ENCODE measurements at regions of chr10 and their contacts with region 1.

Region 1: GRCh38 chr10:61992671-61993668 is 91.5 kb downstream of the ARID5B start:
- DNase-seq: peak; percentile 79 to 88 (median 84)
- H3K4me3 ChIP-seq: peak overlapping the region; percentile 9 to 39
- H3K4me3 Mint-ChIP-seq: peak overlapping the region; percentile 47 to 81 (median 74)
- H3K27ac ChIP-seq: peak overlapping the region; percentile 60
- H3K27ac Mint-ChIP-seq: peak overlapping the region; percentile 87 to 98 (median 94)
- H3K4me1 ChIP-seq: peaks cover 71% of the 10 kb centered on the region
- H3K4me1 Mint-ChIP-seq: peaks cover 52 to 72% (median 56%) of the 10 kb centered on the region in 4 donors
- H3K27me3 ChIP-seq: no peaks in the 10 kb centered on the region
- H3K27me3 Mint-ChIP-seq: peaks cover 0 to 3% of the 10 kb centered on the region in 2 donors

Region 2: DNA sequence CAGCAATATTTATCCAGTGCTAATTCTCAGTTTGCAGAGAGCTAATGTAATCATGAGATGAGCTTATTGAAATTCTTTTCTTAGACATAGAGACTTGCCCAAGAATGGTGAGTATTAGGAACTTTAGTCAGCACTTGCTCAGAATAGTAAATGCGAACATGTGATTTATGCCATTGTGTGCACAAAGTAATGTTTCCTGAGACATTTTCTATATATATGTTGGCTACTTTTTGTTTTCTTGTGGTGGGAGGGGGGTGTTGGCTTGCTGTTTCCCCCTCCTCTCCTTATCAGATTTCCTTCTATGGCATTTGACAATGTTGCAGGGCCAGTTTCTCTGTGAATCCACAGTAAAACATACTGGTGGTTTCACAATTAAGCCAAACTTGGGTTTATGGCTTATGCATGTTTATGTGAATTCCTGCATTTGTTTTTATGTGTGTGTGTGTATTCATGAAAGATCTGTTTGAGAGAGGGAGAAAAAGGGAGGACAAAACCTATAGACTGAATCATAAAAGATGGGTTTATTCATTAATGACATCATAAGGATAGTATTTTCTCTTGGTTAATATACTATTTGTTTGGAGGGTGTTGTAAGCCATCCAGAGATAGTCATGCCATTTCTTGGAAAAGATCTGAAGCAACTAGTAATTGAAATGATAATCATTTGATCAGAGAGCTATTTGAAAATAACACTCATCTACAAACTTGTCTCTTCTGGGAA is 55.2 kb before region 1 on chr10:
- CTCF ChIA-PET with region 1: interaction called, 4 read pairs
- POLR2A ChIA-PET with region 1: interaction called, 20 read pairs
- intact Hi-C with region 1: no loop called
- DNase-seq: no peak
- H3K4me3 ChIP-seq: peak overlapping the region in 1 of 2 donors; percentile 15
- H3K4me3 Mint-ChIP-seq: peak overlapping the region; percentile 3 to 83 (median 68)
- H3K27ac ChIP-seq: peak overlapping the region; percentile 23
- H3K27ac Mint-ChIP-seq: peak overlapping the region; percentile 31 to 94 (median 87)
- H3K4me1 ChIP-seq: peaks cover 78% of the 10 kb centered on the region
- H3K4me1 Mint-ChIP-seq: peaks cover 66 to 87% (median 75%) of the 10 kb centered on the region in 4 donors
- H3K27me3 ChIP-seq: no peaks in the 10 kb centered on the region
- H3K27me3 Mint-ChIP-seq: no peaks in the 10 kb centered on the region

Region 3: GRCh38 chr10:61974601-61975390 is 18.2 kb before region 1 on chr10:
- CTCF ChIA-PET with region 1: interaction called, 4 read pairs
- POLR2A ChIA-PET with region 1: interaction called, 6 read pairs
- intact Hi-C with region 1: loop called (anchors 2 kb)
- DNase-seq: no peak
- H3K4me3 ChIP-seq: no peak overlapping the region
- H3K4me3 Mint-ChIP-seq: no peak overlapping the region
- H3K27ac ChIP-seq: no peak overlapping the region
- H3K27ac Mint-ChIP-seq: peak overlapping the region in 1 of 7 donors; percentile 62
- H3K4me1 ChIP-seq: peaks cover 10% of the 10 kb centered on the region
- H3K4me1 Mint-ChIP-seq: peaks cover 13 to 29% (median 24%) of the 10 kb centered on the region in 4 donors
- H3K27me3 ChIP-seq: no peaks in the 10 kb centered on the region
- H3K27me3 Mint-ChIP-seq: no peaks in the 10 kb centered on the region

Region 4: GRCh38 chr10:62109587-62110293 is 116.8 kb after region 1 on chr10:
- CTCF ChIA-PET with region 1: no interaction called
- POLR2A ChIA-PET with region 1: no interaction called
- intact Hi-C with region 1: no loop called
- DNase-seq: no peak
- H3K4me3 ChIP-seq: no peak overlapping the region
- H3K4me3 Mint-ChIP-seq: peak overlapping the region in 6 of 8 donors; percentile 12 to 79 (median 68)
- H3K27ac ChIP-seq: no peak overlapping the region
- H3K27ac Mint-ChIP-seq: peak overlapping the region; percentile 0 to 82 (median 70)
- H3K4me1 ChIP-seq: peaks cover 31% of the 10 kb centered on the region
- H3K4me1 Mint-ChIP-seq: peaks cover 32 to 52% (median 36%) of the 10 kb centered on the region in 4 donors
- H3K27me3 ChIP-seq: no peaks in the 10 kb centered on the region
- H3K27me3 Mint-ChIP-seq: no peaks in the 10 kb centered on the region

Region 5: GRCh38 chr10:62130948-62131347 is 138.0 kb after region 1 on chr10:
- CTCF ChIA-PET with region 1: no interaction called
- POLR2A ChIA-PET with region 1: no interaction called
- intact Hi-C with region 1: no loop called
- DNase-seq: no peak
- H3K4me3 ChIP-seq: no peak overlapping the region
- H3K4me3 Mint-ChIP-seq: no peak overlapping the region
- H3K27ac ChIP-seq: no peak overlapping the region
- H3K27ac Mint-ChIP-seq: peak overlapping the region in 1 of 7 donors; percentile 37
- H3K4me1 ChIP-seq: no peaks in the 10 kb centered on the region
- H3K4me1 Mint-ChIP-seq: peaks cover 0 to 9% (median 5%) of the 10 kb centered on the region in 4 donors
- H3K27me3 ChIP-seq: no peaks in the 10 kb centered on the region
- H3K27me3 Mint-ChIP-seq: no peaks in the 10 kb centered on the region